Psoas muscle (tissue), 8 donors: ENCODE measurements at regions of chr7 and their contacts with region 1.

Region 1: GRCh38 chr7:98630149-98630548 is 13.1 kb downstream of the NPTX2 start:
- DNase-seq: no peak
- ATAC-seq: no peak
- H3K4me3 ChIP-seq: no peak overlapping the region
- H3K27ac ChIP-seq: no peak overlapping the region
- H3K4me1 ChIP-seq: no peaks in the 10 kb centered on the region
- H3K27me3 ChIP-seq: peaks cover 0 to 10% (median 0%) of the 10 kb centered on the region in 3 donors
- CTCF ChIP-seq: no peak

Region 2: GRCh38 chr7:97298561-97298960 is 1331.6 kb before region 1 on chr7:
- intact Hi-C with region 1: loop called in 1 of 2 experiments (anchors 5 kb)
- DNase-seq: no peak
- ATAC-seq: no peak
- H3K4me3 ChIP-seq: no peak overlapping the region
- H3K27ac ChIP-seq: no peak overlapping the region
- H3K4me1 ChIP-seq: no peaks in the 10 kb centered on the region
- H3K27me3 ChIP-seq: peaks cover 0 to 2% (median 0%) of the 10 kb centered on the region in 3 donors
- CTCF ChIP-seq: no peak